ENCODE measurements at regions of chr7 and their contacts with region 1.

Region 1: DNA sequence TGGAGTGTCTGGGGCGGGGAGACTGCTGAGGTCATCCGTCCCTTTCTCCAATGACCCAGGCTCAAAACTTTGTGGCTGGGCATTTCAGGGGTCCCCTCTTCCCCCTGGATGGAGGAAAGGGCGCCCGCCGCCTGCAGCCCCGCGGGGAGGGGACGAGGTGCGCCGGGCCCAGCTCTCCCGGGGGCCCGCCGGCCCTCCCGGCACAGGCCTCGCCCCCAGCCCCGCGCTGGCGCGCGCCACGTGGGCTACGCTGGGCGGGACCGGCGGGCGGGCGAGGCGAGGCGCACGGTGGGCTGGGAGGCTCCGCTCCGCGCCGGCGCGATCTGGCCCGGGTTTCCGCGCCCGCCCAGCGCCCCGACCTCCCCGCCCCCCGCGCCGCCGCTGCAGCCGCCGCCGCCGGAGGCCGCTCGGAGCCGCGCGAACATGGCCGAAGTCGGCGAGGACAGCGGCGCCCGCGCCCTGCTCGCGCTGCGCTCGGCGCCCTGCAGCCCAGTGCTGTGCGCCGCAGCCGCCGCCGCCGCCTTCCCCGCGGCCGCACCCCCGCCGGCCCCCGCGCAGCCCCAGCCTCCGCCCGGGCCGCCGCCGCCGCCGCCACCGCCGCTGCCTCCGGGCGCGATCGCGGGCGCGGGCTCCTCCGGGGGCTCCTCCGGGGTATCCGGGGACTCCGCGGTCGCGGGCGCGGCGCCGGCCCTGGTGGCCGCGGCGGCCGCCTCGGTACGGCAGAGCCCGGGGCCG is at the start of gene FOXK1:
- DNase-seq: peak in 1 of 2 donors; percentile 82
- H3K4me3 ChIP-seq: peak within 1 kb of the TSS; percentile 92 to 97
- H3K27ac ChIP-seq: peak within 1 kb of the TSS; percentile 85 to 94
- H3K4me1 ChIP-seq: peaks cover 0 to 11% of the 10 kb centered on the region in 2 donors
- H3K27me3 ChIP-seq: no peaks in the 10 kb centered on the region
- CTCF ChIP-seq: peak in 1 of 3 experiments; percentile 9
- total RNA-seq, gene FOXK1: 31.7 TPM

Region 2: DNA sequence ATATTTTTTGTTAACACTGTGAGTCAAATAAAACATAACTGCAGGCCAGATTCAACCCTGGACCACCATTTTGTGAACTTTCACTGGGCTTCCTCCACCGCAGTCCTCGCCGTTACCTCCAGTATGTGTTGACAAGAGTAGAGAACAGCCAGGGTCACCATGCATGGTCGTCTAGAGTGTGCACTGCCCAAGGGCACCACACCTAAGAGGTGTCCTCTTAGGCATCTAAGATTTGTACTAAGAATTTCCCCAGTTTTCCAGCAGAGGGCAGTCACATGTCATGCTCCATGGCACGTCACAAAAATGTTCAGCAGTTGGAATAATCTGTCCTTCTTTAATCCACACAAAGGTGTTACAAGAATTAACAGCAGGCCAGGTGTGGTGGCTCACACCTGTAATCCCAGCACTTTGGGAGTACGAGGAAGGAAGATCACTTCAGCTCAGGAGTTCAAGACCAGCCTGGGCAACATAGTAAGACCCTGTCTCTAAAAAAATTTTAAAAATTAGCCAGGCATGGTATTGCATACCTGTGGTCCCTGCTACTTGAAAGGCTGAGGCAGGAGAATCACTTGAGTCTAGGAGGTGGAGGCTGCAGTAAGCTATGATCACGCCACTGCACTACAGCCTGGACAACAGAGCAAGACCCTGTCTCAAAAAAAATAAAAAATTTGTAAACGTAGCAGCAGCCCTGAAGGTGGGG is 71.1 kb before region 1 on chr7:
- intact Hi-C with region 1: loop called (anchors 2 kb)
- DNase-seq: peak in 1 of 2 donors; percentile 74
- H3K4me3 ChIP-seq: no peak overlapping the region
- H3K27ac ChIP-seq: no peak overlapping the region
- H3K4me1 ChIP-seq: peaks cover 0 to 11% of the 10 kb centered on the region in 2 donors
- H3K27me3 ChIP-seq: no peaks in the 10 kb centered on the region
- CTCF ChIP-seq: peak; percentile 86 to 89 (median 87)

Region 3: GRCh38 chr7:4641667-4642467 is 40.2 kb before region 1 on chr7:
- intact Hi-C with region 1: loop called (anchors 1 kb)
- DNase-seq: peak; percentile 63 to 97
- H3K4me3 ChIP-seq: peak overlapping the region; percentile 67 to 76
- H3K27ac ChIP-seq: peak overlapping the region; percentile 87 to 94
- H3K4me1 ChIP-seq: peaks cover 0 to 4% of the 10 kb centered on the region in 2 donors
- H3K27me3 ChIP-seq: no peaks in the 10 kb centered on the region
- CTCF ChIP-seq: peak; percentile 15 to 90 (median 41)

Region 4: DNA sequence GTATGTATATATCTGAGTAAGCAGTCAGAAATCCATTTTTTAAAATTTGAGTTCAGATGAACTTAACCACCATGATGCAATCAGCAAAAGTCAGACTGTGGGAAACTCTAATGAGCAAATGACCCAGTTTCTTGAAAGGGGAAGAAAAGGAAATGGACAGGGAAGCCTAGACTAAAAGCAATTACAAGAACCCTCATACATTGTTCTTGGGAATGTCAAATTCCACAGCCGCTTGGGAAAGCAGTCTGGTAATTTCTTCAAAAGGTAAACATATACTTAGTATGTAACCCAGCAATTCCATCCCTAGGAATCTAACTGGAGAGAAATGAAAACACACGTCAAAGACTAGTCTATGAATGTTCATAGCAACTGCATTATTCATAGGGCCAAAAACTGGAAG is 16.4 kb before region 1 on chr7:
- intact Hi-C with region 1: loop called (anchors 1 kb)
- DNase-seq: no peak
- H3K4me3 ChIP-seq: no peak overlapping the region
- H3K27ac ChIP-seq: peak overlapping the region; percentile 77 to 82
- H3K4me1 ChIP-seq: peaks cover 7 to 17% of the 10 kb centered on the region in 2 donors
- H3K27me3 ChIP-seq: no peaks in the 10 kb centered on the region
- CTCF ChIP-seq: no peak

Region 5: DNA sequence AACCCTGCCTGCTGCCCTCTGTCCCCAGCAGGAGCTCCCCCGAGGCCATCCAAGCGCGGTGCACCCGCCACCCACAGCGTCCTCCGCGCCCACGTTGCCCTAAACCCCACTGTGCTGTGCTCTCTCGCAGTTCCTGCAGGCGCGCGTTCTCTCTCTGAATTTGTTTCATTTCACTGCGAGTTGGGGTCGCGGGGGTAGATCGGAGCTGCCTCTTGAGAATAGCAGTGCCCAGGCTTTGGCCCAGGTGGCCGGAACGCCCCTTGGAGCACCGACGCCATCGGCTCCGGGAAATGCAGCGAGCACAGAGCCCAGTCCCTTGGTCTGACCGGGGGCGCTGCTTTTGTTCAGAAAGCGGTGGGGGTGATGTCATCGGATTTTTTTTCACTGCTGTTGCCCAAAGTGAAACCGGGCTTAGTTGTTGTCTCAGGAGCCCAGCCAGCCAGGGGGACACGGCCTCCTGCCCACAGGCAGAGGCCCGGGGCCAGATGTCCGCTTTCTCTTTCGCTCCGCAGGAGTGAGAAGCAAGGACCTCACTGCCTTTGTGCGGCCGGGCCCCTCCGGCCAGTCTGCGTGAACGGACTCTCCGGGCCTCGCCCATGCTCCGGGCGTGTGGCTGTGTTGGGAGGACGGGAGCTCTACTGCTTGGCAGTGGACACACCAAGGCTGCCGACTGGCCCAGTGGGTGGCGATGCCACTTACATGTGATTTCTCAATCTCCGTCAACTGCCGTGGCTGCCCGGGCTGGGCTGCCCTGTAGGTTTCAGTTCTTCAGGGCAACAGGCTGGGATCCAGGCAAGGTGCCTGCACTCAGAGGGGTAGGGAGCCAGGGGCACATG is 43.2 kb after region 1 on chr7:
- intact Hi-C with region 1: loop called (anchors 1 kb)
- DNase-seq: peak; percentile 56 to 93
- H3K4me3 ChIP-seq: peak overlapping the region; percentile 62 to 82
- H3K27ac ChIP-seq: peak overlapping the region; percentile 95 to 98
- H3K4me1 ChIP-seq: peaks cover 16 to 34% of the 10 kb centered on the region in 2 donors
- H3K27me3 ChIP-seq: no peaks in the 10 kb centered on the region
- CTCF ChIP-seq: peak in 2 of 3 experiments; percentile 2 to 21

Region 6: DNA sequence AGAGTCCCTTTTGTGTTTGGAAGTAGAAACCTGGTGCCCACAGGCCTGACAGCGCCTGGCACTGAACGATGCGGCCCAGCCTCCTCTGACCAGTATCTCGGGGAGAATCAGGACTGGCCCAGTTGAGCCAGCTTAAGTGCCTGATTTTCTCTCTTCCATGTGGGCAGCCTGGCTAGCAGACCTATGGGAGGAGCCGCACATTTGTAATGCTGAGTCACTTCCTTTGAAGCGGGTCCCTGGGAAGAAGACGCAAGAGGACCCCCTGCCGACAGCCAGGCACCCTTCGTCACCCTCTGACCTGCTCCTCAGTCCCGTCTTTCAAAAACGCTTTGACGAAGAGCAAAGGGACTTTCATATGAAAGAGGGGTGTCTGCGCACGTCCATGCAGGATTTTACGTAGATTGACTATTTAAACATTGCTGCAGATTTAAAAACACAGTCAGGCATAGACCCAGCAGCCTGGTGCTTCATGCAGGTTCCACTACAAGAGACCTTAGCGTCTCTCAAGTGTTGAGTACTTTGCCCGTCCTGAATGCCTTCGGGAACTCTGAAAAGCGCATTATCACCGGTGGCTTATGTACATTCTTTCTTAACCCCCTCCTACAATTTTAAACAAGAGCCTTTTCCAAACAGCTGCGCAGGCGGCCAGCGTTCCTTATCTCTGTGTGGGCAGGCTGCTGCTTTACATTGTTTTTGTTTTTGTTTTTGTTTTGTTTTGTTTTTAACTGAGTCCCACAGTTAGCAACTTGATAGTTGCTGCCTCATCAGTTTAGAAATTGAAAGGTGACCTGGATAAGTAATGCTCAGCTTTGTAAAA is 56.9 kb after region 1 on chr7:
- intact Hi-C with region 1: loop called (anchors 2 kb)
- DNase-seq: peak in 1 of 2 donors; percentile 87
- H3K4me3 ChIP-seq: peak overlapping the region; percentile 45 to 59
- H3K27ac ChIP-seq: peak overlapping the region; percentile 76 to 88
- H3K4me1 ChIP-seq: peaks cover 0 to 22% of the 10 kb centered on the region in 2 donors
- H3K27me3 ChIP-seq: no peaks in the 10 kb centered on the region
- CTCF ChIP-seq: no peak